Left lung (tissue), 14 donors: ENCODE measurements at regions of chr9 and their contacts with region 1.

Region 1: GRCh38 chr9:36798350-36799065 is 225.8 kb downstream of the MELK start:
- DNase-seq: no peak
- ATAC-seq: no peak
- H3K4me3 ChIP-seq: no peak overlapping the region
- H3K27ac ChIP-seq: no peak overlapping the region
- H3K4me1 ChIP-seq: no peaks in the 10 kb centered on the region
- H3K27me3 ChIP-seq: peaks cover 0 to 21% of the 10 kb centered on the region in 2 donors
- CTCF ChIP-seq: no peak

Region 2: DNA sequence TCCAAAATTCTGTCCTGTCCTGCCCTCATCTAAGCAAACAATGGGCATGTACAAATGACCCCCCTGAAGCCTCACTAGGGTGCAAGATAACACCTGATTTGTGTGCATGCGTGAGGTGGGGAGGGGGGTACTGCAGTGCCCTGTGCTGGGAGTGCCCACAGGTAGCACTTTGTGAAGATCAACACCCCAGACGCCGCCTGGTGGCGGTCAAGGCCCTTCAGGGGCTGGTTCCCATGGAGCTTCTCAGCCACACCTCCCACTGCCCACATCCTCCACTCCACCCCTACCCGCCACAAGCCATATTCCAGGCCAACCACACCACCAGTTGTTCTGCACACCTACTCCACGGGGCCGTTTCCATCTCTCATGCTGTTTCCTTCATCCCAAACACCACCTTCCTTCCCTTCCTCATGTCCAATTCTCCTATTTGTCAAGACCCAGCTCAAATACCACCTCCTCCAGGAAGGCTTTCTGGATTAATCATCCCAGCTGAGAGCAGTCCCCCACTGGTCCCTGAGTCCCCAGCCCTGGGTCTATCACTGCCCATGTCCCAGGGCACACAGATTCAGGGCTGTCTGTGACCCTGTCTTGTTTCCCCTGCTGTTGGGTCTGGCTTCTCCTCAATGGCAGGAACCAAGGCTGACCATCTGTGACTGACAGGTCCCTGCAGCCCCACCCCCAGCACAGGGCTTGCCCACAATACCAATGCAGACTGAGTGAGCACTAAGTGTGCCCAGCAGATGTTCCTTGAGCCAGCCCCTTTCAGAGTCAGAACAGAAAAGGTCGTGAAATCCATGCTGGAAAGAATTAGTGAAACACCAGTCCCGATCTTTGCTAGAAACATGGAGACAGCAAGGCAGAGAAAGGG is 57.2 kb after region 1 on chr9:
- intact Hi-C with region 1: loop called in 1 of 2 experiments (anchors 10 kb)
- DNase-seq: peak in 1 of 4 donors; percentile 72
- ATAC-seq: peak; percentile 47
- H3K4me3 ChIP-seq: no peak overlapping the region
- H3K27ac ChIP-seq: no peak overlapping the region
- H3K4me1 ChIP-seq: no peaks in the 10 kb centered on the region
- H3K27me3 ChIP-seq: peaks cover 3 to 42% of the 10 kb centered on the region in 2 donors
- CTCF ChIP-seq: no peak